ENCODE measurements at regions of chr16 and their contacts with region 1.

Region 1: DNA sequence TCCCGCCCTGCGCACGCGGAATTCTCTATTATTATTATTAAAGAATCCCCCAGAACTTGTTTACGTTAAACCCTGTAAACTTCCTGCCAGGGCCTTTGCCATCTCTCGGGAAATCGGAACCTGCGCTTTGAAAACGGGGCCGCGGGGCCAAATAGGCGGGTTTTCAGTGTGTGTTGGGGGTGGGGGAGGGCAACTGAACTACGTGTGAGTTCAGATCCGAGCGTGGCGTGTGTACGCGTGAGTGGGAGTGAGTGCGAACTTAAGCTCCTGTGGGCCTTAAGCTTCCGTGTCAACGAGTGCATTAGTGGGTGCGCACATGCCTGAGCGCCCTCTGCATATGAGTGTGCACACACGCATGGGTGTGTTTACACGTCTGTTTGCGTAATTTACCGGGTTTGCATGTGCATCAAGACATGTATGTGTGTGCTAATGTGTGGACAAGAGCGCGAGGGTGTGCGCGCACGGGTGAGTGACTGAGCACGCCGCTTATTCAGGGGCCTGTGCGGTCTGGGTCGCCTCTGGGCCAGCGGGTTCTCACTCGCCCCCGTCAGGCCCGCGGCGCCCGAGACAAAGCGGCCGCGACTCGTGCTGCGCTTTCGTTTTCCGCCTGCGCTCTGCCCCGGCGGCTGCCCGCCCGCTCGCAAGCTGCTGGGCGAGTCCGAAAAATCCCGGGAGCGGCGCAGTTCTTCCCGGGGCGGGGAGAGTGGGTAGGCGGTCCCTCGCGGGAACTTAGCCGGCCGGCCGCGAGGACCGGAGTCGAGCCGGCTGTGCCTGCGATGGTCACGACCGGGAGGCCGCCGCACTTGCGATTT is 1.2 kb upstream of the FOXF1 start:
- DNase-seq: peak; percentile 88

Region 2: GRCh38 chr16:86432691-86433090 is 76.5 kb before region 1 on chr16:
- intact Hi-C with region 1: loop called in 1 of 2 experiments (anchors 5 kb)
- DNase-seq: peak; percentile 84

Region 3: GRCh38 chr16:86476956-86477530 is 32.1 kb before region 1 on chr16:
- intact Hi-C with region 1: loop called in 1 of 2 experiments (anchors 1 kb)
- DNase-seq: no peak

Region 4: GRCh38 chr16:86545954-86546637 is 36.9 kb after region 1 on chr16:
- intact Hi-C with region 1: no loop called
- DNase-seq: peak; percentile 47

Measured in posterior vena cava (tissue), 2 donors.